ENCODE measurements at regions of chr7 and their contacts with region 1.

Region 1: GRCh38 chr7:26365077-26365900 is 73.6 kb downstream of the SNX10 start:
- DNase-seq: peak in 8 of 9 experiments; percentile 20 to 82 (median 53)
- ATAC-seq: peak; percentile 77
- H3K4me3 ChIP-seq: no peak overlapping the region
- H3K4me3 Mint-ChIP-seq: no peak overlapping the region
- H3K27ac ChIP-seq: no peak overlapping the region
- H3K27ac Mint-ChIP-seq: no peak overlapping the region
- H3K4me1 ChIP-seq: peaks cover 8% of the 10 kb centered on the region
- H3K4me1 Mint-ChIP-seq: peaks cover 11% of the 10 kb centered on the region
- H3K27me3 ChIP-seq: no peaks in the 10 kb centered on the region
- H3K27me3 Mint-ChIP-seq: no peaks in the 10 kb centered on the region
- CTCF ChIP-seq: peak; percentile 75

Region 2: GRCh38 chr7:25886387-25887240 is 478.7 kb before region 1 on chr7:
- CTCF ChIA-PET with region 1: interaction called, 141 read pairs
- POLR2A ChIA-PET with region 1: no interaction called
- intact Hi-C with region 1: no loop called
- DNase-seq: no peak
- ATAC-seq: no peak
- H3K4me3 ChIP-seq: no peak overlapping the region
- H3K4me3 Mint-ChIP-seq: no peak overlapping the region
- H3K27ac ChIP-seq: no peak overlapping the region
- H3K27ac Mint-ChIP-seq: no peak overlapping the region
- H3K4me1 ChIP-seq: no peaks in the 10 kb centered on the region
- H3K4me1 Mint-ChIP-seq: no peaks in the 10 kb centered on the region
- H3K27me3 ChIP-seq: peaks cover 0 to 2% of the 10 kb centered on the region in 2 experiments
- H3K27me3 Mint-ChIP-seq: peaks cover 27% of the 10 kb centered on the region
- CTCF ChIP-seq: no peak

Region 3: GRCh38 chr7:26078437-26079336 is 286.6 kb before region 1 on chr7:
- CTCF ChIA-PET with region 1: interaction called, 122 read pairs
- POLR2A ChIA-PET with region 1: no interaction called
- intact Hi-C with region 1: loop called (anchors 1 kb)
- DNase-seq: peak; percentile 65 to 88 (median 81)
- ATAC-seq: peak; percentile 100
- H3K4me3 ChIP-seq: peak overlapping the region in 1 of 2 experiments; percentile 18
- H3K4me3 Mint-ChIP-seq: no peak overlapping the region
- H3K27ac ChIP-seq: no peak overlapping the region
- H3K27ac Mint-ChIP-seq: no peak overlapping the region
- H3K4me1 ChIP-seq: peaks cover 4% of the 10 kb centered on the region
- H3K4me1 Mint-ChIP-seq: peaks cover 6% of the 10 kb centered on the region
- H3K27me3 ChIP-seq: peaks cover 0 to 8% of the 10 kb centered on the region in 2 experiments
- H3K27me3 Mint-ChIP-seq: peaks cover 19% of the 10 kb centered on the region
- CTCF ChIP-seq: peak; percentile 80

Region 4: GRCh38 chr7:26278770-26279169 is 86.5 kb before region 1 on chr7:
- CTCF ChIA-PET with region 1: interaction called, 23 read pairs
- POLR2A ChIA-PET with region 1: no interaction called
- intact Hi-C with region 1: loop called (anchors 1 to 2 kb)
- DNase-seq: peak in 2 of 9 experiments; percentile 46 to 64
- ATAC-seq: peak; percentile 26
- H3K4me3 ChIP-seq: no peak overlapping the region
- H3K4me3 Mint-ChIP-seq: no peak overlapping the region
- H3K27ac ChIP-seq: no peak overlapping the region
- H3K27ac Mint-ChIP-seq: no peak overlapping the region
- H3K4me1 ChIP-seq: no peaks in the 10 kb centered on the region
- H3K4me1 Mint-ChIP-seq: peaks cover 8% of the 10 kb centered on the region
- H3K27me3 ChIP-seq: no peaks in the 10 kb centered on the region
- H3K27me3 Mint-ChIP-seq: no peaks in the 10 kb centered on the region
- CTCF ChIP-seq: no peak

Region 5: DNA sequence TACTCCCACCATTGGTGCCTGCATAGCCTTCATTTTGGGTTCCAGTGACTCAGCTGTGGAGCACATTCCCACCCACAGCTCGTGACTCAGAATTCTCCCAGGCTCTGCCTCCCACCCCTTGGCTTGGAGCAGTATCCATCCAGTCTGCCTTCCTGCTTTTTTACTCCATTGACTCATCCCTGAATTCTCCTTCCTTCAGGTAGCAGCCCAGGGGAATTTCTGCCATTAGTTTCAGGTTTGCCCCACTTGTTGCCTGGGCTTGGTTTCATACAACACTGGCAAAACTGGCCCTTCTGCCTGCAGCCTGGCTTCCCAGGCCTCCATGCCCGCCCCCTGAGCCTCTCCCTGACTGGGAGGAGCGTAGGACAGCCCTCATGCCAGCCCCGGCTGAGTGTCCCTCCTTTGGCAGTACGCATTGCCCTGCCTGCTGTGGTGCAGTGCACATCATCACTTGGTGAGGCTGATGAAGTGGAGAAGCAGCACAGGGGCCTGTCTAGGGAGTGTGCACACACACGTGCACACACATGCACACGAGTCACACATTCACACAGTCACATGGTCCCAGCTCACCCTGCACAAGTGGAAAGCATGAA is 18.6 kb before region 1 on chr7:
- CTCF ChIA-PET with region 1: interaction called, 31 read pairs
- POLR2A ChIA-PET with region 1: no interaction called
- intact Hi-C with region 1: no loop called
- DNase-seq: no peak
- ATAC-seq: no peak
- H3K4me3 ChIP-seq: no peak overlapping the region
- H3K4me3 Mint-ChIP-seq: no peak overlapping the region
- H3K27ac ChIP-seq: no peak overlapping the region
- H3K27ac Mint-ChIP-seq: no peak overlapping the region
- H3K4me1 ChIP-seq: no peaks in the 10 kb centered on the region
- H3K4me1 Mint-ChIP-seq: no peaks in the 10 kb centered on the region
- H3K27me3 ChIP-seq: no peaks in the 10 kb centered on the region
- H3K27me3 Mint-ChIP-seq: no peaks in the 10 kb centered on the region
- CTCF ChIP-seq: no peak

Region 6: GRCh38 chr7:26390016-26390415 is 24.7 kb after region 1 on chr7:
- CTCF ChIA-PET with region 1: no interaction called
- POLR2A ChIA-PET with region 1: no interaction called
- intact Hi-C with region 1: no loop called
- DNase-seq: no peak
- ATAC-seq: no peak
- H3K4me3 ChIP-seq: no peak overlapping the region
- H3K4me3 Mint-ChIP-seq: no peak overlapping the region
- H3K27ac ChIP-seq: no peak overlapping the region
- H3K27ac Mint-ChIP-seq: no peak overlapping the region
- H3K4me1 ChIP-seq: no peaks in the 10 kb centered on the region
- H3K4me1 Mint-ChIP-seq: no peaks in the 10 kb centered on the region
- H3K27me3 ChIP-seq: peaks cover 0 to 4% of the 10 kb centered on the region in 2 experiments
- H3K27me3 Mint-ChIP-seq: peaks cover 32% of the 10 kb centered on the region
- CTCF ChIP-seq: no peak

Region 7: DNA sequence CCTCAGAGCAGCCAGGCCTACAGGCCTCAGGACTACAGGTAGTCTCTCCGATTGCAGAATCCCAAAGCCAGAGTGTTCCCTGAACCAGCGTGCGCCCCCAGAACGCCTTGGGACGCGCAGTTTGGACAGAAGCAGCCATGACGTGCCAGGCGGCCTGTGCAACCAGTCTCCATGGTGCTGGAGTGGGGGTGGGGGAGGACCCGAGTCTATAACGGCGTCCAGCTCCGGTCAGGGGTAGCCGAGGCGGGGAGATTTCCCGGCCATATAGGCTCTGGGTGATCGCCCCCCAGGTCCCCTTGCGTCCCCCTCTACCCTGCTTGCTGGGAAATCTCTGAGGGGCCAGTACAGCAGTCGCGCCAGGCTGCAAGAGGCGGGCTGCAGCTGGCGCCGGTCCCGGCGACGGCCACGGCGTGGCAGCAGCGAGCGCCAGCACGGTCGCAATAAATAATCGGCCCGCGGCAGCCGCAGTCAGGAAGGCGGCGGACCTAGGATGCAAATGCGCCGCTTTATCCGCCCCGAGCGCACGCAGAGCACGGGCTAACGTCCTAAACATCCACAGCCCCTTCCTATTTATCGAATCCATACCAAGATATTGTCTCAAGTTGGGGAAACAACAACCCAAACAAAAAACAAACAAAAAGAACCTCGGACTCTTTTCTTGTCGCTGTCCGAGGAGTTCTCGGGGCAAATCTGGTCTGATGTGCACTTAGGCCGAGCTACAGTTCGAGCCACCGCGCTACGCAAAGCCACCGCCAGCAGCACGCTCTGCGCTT is 785.5 kb after region 1 on chr7:
- CTCF ChIA-PET with region 1: interaction called, 10 read pairs
- POLR2A ChIA-PET with region 1: no interaction called
- intact Hi-C with region 1: no loop called
- DNase-seq: peak in 8 of 9 experiments; percentile 37 to 82 (median 66)
- ATAC-seq: peak; percentile 83
- H3K4me3 ChIP-seq: peak overlapping the region; percentile 32 to 54
- H3K4me3 Mint-ChIP-seq: peak overlapping the region; percentile 76
- H3K27ac ChIP-seq: no peak overlapping the region
- H3K27ac Mint-ChIP-seq: no peak overlapping the region
- H3K4me1 ChIP-seq: peaks cover 51% of the 10 kb centered on the region
- H3K4me1 Mint-ChIP-seq: peaks cover 47% of the 10 kb centered on the region
- H3K27me3 ChIP-seq: peaks cover 62 to 77% of the 10 kb centered on the region in 2 experiments
- H3K27me3 Mint-ChIP-seq: peaks cover 85% of the 10 kb centered on the region
- CTCF ChIP-seq: peak; percentile 89